Activated CD8-positive, alpha-beta memory T cell treated with anti-CD3 and anti-CD28 coated beads, Interleukin-2, amount 10 ng/mL, durations not matched to agents 7 days and 5 days (primary cell): ENCODE measurements at regions of chr5 and their contacts with region 1.

Region 1: GRCh38 chr5:179763215-179763945 is 30.4 kb upstream of the LTC4S start:
- DNase-seq: peak; percentile 68
- ATAC-seq: peak; percentile 66
- H3K4me3 Mint-ChIP-seq: no peak overlapping the region
- H3K27ac Mint-ChIP-seq: no peak overlapping the region
- H3K4me1 Mint-ChIP-seq: peaks cover 47% of the 10 kb centered on the region
- H3K27me3 Mint-ChIP-seq: no peaks in the 10 kb centered on the region

Region 2: DNA sequence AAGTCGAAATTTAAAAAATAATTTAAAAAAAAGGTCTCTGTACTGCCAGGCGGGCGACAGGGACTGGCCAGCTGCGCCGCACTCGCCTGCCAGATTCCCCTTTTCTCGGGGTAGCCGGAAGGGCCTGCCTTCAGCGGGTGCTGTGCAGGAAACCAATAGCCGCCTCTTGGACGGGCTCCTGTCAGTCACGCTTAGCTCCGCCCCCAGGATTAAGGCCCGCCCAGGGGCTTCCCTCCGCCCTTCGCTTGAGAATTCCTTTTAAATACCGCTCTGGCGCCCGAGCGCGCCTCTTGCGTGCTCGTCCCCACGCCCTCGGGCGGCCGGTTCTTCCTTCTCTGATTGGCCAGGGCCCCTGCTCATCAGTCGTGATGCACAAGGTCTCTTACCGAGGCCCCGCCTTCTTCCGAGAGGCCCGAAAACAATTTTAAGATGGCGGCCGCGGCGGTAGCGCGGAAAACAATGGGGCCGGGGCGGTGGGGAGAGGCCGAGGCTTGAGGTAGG is 30.9 kb before region 1 on chr5 and contains the start of gene MAML1:
- CTCF ChIA-PET with region 1: interaction called, 10 read pairs
- DNase-seq: peak; percentile 100
- ATAC-seq: peak; percentile 97
- H3K4me3 Mint-ChIP-seq: peak within 1 kb of the TSS; percentile 96
- H3K27ac Mint-ChIP-seq: peak within 1 kb of the TSS; percentile 91
- H3K4me1 Mint-ChIP-seq: peaks cover 38% of the 10 kb centered on the region
- H3K27me3 Mint-ChIP-seq: no peaks in the 10 kb centered on the region
- total RNA-seq, gene MAML1: 34.7 to 34.9 TPM

Region 3: DNA sequence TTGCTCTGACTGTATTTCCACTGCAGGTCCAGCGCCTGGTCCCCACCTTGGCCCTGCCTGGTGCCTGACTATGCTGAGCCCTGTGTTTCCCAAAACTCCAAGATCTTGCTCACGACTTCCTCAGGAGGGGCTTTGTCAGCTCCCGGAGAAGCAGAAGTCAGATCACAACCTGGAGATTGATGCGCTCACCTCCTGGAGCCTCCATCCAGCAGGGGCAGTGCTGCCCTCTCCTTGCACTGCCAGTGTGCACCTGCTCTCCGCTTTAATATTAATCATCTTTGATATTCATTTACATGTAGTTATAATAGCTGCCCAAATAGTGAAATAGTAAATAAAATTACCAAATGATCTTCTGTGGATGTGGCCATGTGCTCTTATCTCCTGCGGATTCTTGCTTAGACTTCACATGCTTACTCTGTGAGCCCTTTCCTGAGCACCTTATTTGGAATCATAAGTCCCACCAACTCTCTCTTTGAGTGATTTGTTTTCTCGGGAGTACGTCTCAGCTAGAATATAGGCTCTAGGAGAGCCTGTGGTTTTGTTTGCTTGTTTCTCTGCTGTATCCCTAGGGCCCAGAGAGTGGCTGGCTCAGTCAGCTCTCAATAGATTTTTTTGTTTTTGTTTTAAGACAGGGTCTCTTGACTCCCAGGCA is 13.4 kb before region 1 on chr5:
- CTCF ChIA-PET with region 1: interaction called, 26 read pairs
- DNase-seq: no peak
- ATAC-seq: no peak
- H3K4me3 Mint-ChIP-seq: no peak overlapping the region
- H3K27ac Mint-ChIP-seq: peak overlapping the region; percentile 24
- H3K4me1 Mint-ChIP-seq: peaks cover 21% of the 10 kb centered on the region
- H3K27me3 Mint-ChIP-seq: no peaks in the 10 kb centered on the region

Region 4: DNA sequence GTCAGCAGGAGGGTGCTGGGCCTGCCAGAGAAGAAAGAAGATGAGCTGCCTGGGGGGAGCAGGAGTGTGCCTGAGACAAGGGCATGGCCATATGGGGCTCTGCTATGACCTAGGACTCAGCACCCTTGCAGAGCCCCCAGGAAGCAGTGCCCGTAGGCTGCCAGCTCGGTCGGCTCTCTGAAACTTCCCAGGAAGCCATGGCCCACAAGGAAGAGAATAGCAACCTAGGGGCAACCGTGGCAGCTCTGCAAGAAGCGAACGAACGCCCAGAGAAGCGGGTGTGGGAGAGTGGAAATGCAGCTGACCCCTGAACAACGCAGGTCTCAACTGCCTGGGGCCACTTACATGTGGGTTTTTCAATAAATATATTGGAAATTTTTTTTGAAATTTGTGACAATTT is 19.7 kb after region 1 on chr5:
- CTCF ChIA-PET with region 1: interaction called, 10 read pairs
- DNase-seq: no peak
- ATAC-seq: no peak
- H3K4me3 Mint-ChIP-seq: no peak overlapping the region
- H3K27ac Mint-ChIP-seq: no peak overlapping the region
- H3K4me1 Mint-ChIP-seq: no peaks in the 10 kb centered on the region
- H3K27me3 Mint-ChIP-seq: no peaks in the 10 kb centered on the region

Region 5: DNA sequence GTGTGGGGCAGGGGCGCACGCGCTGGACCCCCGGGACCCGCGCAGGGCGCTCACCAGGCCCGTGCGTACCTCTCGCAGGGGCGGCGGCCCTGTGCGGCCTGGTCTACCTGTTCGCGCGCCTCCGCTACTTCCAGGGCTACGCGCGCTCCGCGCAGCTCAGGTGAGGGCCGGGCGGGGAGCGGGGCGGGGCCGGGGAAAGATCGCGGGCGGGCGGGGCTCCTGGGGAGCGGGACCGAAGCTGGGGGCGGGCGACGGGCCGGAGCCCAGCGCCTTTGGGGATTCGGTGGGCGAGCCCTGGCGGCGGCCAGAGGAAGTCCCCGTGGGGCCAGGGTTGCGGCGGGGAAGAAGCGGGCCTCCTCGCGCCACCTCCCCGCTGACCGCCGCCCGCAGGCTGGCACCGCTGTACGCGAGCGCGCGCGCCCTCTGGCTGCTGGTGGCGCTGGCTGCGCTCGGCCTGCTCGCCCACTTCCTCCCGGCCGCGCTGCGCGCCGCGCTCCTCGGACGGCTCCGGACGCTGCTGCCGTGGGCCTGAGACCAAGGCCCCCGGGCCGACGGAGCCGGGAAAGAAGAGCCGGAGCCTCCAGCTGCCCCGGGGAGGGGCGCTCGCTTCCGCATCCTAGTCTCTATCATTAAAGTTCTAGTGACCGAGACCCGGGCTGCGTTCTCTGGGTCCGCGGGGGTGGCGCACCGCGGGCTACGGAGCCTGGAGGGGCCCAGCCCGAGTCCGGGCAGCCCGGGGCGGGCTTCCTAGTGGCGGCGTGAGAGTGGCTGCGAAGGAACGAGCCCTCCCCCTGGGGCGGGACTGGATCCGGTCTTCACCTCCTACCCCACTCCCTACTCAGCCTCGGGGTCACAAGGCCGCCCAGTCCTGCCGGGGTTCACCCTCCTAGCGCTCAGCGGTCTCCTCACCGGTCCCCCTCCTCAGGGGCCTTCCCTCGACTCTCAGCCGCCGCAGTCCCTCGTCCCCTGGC is 32.8 kb after region 1 on chr5:
- CTCF ChIA-PET with region 1: interaction called, 49 read pairs
- DNase-seq: peak; percentile 73
- ATAC-seq: peak; percentile 79
- H3K4me3 Mint-ChIP-seq: peak overlapping the region; percentile 53
- H3K27ac Mint-ChIP-seq: peak overlapping the region; percentile 31
- H3K4me1 Mint-ChIP-seq: peaks cover 34% of the 10 kb centered on the region
- H3K27me3 Mint-ChIP-seq: no peaks in the 10 kb centered on the region

Region 6: DNA sequence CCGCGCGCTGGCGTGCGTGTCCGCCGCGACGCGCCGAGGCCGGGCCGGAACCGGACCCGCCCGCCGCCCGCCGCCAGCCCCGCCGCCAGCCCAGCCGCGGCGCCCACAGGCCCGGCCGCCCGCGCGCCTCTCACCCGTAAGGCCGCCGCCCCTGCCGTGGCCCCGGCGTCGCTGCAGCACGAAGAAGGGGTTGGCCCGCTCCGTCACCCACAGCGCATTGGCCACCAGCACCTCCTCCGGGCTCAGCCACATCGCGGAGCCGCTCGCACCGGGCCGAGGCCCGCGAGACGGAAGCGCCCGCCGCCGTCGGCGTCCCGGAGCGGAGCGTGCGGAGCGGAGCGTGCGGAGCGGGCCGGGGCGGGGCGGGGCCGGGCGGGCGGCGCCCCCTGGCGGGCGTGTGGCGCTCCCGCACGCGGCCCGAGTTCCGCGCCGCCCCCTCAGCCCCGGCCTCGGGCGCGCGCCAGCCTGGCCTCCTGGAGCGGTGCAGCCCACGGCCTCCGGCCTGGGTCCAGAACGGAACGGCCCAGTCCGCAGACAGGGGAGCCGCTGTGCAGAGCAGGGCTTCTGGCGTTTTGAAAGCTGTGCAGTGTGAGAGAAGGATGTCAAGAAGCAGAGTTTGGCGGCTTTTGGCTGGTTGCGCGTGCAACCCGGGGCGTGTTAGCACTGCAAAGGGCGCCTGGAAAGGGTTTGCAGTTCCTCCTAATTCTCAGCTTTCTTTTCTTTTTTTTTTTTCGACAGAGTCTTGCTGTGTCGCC is 144.4 kb after region 1 on chr5 and contains the start of gene TBC1D9B:
- CTCF ChIA-PET with region 1: interaction called, 22 read pairs
- DNase-seq: peak; percentile 69
- ATAC-seq: peak; percentile 93
- H3K4me3 Mint-ChIP-seq: peak within 1 kb of the TSS; percentile 83
- H3K27ac Mint-ChIP-seq: peak within 1 kb of the TSS; percentile 75
- H3K4me1 Mint-ChIP-seq: peaks cover 18% of the 10 kb centered on the region
- H3K27me3 Mint-ChIP-seq: no peaks in the 10 kb centered on the region
- total RNA-seq, gene TBC1D9B: 71.6 to 83.3 TPM